ENCODE measurements at regions of chr22 and their contacts with region 1.

Region 1: DNA sequence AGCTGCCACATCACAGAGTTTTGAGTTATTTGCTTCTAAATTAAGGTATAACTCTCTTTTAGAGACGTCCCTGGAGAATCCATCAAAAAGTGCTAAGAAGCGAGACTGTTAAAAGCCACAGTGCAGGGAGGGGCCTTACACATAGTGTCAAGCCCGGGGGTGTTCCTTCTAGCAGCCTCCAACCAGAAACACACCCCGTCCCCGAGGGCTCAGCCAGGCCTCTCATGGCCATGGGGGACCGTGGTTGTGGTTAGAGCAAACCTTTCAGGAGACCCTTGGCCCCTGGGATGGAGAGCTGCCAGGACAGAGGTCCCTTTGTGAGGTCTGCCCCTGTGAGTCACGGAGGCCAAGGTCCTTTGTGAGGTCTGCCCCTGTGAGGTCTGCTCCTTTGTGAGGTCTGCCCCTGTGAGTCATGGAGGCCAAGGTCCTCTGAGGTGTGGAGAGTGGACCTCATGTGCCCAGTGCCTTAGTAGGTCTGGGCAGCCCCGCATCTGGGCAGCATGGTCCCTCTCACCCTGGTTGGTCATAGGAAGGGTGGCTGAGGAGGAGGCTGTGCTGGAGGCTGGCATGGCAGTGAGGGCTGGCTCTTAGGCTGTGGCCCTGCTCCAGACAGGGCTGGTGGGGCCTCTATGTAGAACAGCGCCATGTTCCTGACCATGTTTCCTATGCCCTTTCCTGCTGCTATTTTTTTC is 5.4 kb downstream of the GNAZ start:
- DNase-seq: no peak

Region 2: GRCh38 chr22:23128269-23129108 is 52.8 kb after region 1 on chr22:
- intact Hi-C with region 1: no loop called
- DNase-seq: peak; percentile 88

Region 3: GRCh38 chr22:23256986-23257888 is 181.6 kb after region 1 on chr22:
- intact Hi-C with region 1: loop called in 1 of 2 experiments (anchors 5 kb)
- DNase-seq: peak; percentile 95

Measured in posterior vena cava (tissue), 2 donors.